HepG2 (cell line): ENCODE measurements at regions of chr1 and their contacts with region 1.

Region 1: DNA sequence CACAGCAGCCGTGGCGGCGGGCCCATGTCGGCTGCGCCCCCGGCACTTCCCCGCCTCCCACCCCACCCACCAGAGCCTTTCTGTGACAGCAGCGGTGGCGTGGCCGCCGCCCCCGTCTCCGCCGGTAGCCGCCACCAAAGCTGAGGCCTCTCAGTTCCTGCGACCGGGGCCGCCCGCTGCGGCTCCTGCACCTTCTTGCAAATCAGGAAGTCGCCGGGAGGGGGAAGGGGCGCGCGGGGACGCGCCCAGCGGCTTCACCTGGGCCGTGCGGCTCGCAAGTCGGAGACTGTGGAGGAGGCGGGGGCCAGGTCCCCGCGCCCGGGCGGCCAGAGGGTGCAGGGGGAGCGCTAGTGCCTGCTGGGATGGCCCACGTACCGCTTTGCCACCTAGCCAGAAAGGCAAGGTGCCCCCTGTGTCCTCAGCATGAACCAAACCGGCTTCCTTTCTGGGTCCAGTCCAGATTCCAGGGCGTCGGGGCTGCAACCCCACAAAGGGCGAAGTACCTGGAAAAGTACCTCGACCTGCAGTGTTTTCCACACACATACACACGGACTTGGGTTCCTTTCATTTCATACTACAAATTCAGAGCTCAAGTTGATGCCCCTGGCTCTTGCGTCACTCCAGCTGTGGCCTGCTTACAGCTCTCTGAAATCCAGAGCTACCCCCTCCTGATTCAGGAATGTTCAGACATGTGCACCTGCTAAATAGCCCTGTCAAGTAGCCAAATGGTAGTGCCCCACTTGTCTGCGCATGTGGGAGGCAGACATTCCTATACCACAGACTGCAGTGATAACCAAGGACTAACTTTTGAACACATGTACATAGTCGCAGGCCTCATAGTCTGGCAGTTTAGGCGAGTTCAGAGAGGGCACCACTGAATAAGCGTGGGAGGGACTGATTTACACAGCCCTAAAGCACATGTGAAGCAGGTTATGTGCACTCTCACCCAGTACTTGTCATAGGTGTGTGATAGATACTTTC is at the start of gene DENND1B:
- DNase-seq: peak; percentile 52
- ATAC-seq: peak; percentile 92
- H3K4me3 ChIP-seq: peak within 1 kb of the TSS; percentile 65 to 93 (median 66)
- H3K27ac ChIP-seq: peak within 1 kb of the TSS; percentile 72
- H3K4me1 ChIP-seq: peaks cover 23% of the 10 kb centered on the region
- H3K27me3 ChIP-seq: no peaks in the 10 kb centered on the region
- CTCF ChIP-seq: peak; percentile 40; the same call in 1 of the 2 replicates
- EP300 ChIP-seq: no peak
- POLR2A ChIP-seq: peak; percentile 40 to 57; a peak in 2 of 4 replicates
- RAD21 ChIP-seq: no peak; the same call in 1 of the 2 replicates
- total RNA-seq, gene DENND1B: 5.7 and 7.5 TPM in 2 replicates

Region 2: DNA sequence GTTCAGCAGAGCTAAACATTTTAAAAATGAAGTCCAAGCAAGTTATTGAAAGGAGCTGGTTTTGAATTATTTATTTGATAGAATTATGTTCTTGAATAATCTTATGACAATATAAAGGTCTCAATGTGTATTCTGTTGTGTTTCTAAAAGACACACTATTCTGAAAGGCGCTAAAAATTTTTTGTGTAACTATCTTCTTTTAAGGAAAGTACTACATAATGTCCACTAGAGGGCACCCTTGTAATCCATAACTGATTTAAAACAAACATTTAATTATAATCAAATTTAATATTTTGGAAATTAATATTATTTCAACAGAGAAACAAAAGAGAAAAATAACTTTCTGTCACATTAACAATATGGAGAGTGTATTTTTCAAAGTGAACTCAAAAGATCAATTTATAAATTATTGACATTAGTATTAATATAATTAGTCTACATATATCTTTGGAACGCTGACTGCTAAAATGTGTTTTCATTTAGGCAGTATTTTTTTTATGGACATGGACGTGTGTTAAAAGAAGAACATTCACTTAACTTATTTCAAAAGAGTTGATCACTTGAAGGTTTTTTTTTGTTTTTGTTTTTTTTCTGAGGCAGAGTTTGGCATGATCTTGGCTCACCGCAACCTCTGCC is 248.7 kb before region 1 on chr1:
- CTCF ChIA-PET with region 1: no interaction called
- POLR2A ChIA-PET with region 1: no interaction called
- in situ Hi-C with region 1: no loop called
- intact Hi-C with region 1: loop called (anchors 5 kb)
- DNase-seq: peak; percentile 21
- ATAC-seq: no peak
- H3K4me3 ChIP-seq: no peak overlapping the region
- H3K27ac ChIP-seq: no peak overlapping the region
- H3K4me1 ChIP-seq: no peaks in the 10 kb centered on the region
- H3K27me3 ChIP-seq: no peaks in the 10 kb centered on the region
- CTCF ChIP-seq: no peak; the same call in 1 of the 2 replicates
- EP300 ChIP-seq: no peak
- POLR2A ChIP-seq: no peak
- RAD21 ChIP-seq: no peak

Region 3: GRCh38 chr1:197915862-197916499 is 140.4 kb after region 1 on chr1:
- CTCF ChIA-PET with region 1: interaction called, 3 read pairs
- POLR2A ChIA-PET with region 1: no interaction called
- in situ Hi-C with region 1: loop called (anchors 10 kb)
- intact Hi-C with region 1: loop called (anchors 5 kb)
- DNase-seq: peak; percentile 67
- ATAC-seq: peak; percentile 92
- H3K4me3 ChIP-seq: peak overlapping the region; percentile 30 to 68 (median 50)
- H3K27ac ChIP-seq: no peak overlapping the region
- H3K4me1 ChIP-seq: peaks cover 57% of the 10 kb centered on the region
- H3K27me3 ChIP-seq: peaks cover 20 to 91% of the 10 kb centered on the region in 2 experiments
- CTCF ChIP-seq: peak; percentile 69
- EP300 ChIP-seq: no peak
- POLR2A ChIP-seq: no peak
- RAD21 ChIP-seq: peak; percentile 63

Region 4: GRCh38 chr1:198246337-198246736 is 470.8 kb after region 1 on chr1:
- CTCF ChIA-PET with region 1: no interaction called
- POLR2A ChIA-PET with region 1: no interaction called
- in situ Hi-C with region 1: no loop called
- intact Hi-C with region 1: no loop called
- DNase-seq: no peak
- ATAC-seq: no peak
- H3K4me3 ChIP-seq: no peak overlapping the region
- H3K27ac ChIP-seq: no peak overlapping the region
- H3K4me1 ChIP-seq: no peaks in the 10 kb centered on the region
- H3K27me3 ChIP-seq: no peaks in the 10 kb centered on the region
- CTCF ChIP-seq: no peak
- EP300 ChIP-seq: no peak
- POLR2A ChIP-seq: no peak
- RAD21 ChIP-seq: no peak